ENCODE measurements at regions of chr5 and their contacts with region 1.

Region 1: GRCh38 chr5:110757118-110757729 is 18.4 kb downstream of the SLC25A46 start:
- DNase-seq: no peak
- H3K4me3 ChIP-seq: no peak overlapping the region
- CTCF ChIP-seq: peak; percentile 53

Region 2: DNA sequence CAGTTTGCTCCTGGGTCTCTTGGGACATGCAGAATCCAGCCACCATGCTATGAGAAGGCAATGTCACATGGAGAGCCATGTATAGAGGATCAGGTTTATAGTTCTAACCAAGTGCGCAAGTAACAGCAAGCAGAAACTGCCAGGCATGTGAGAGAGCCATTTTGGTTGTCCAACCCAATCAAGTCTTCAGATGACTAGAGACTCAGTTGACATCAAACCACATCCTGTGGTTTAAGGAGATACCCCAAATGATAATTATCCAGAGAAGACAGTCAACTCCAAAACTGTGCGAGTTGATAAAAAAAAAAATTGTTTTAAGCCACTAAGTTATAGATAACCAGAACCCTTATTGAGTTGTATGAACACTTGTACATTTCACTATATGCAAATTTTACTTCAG is 71.0 kb before region 1 on chr5:
- CTCF ChIA-PET with region 1: no interaction called
- POLR2A ChIA-PET with region 1: no interaction called
- DNase-seq: no peak
- H3K4me3 ChIP-seq: no peak overlapping the region
- CTCF ChIP-seq: no peak

Region 3: DNA sequence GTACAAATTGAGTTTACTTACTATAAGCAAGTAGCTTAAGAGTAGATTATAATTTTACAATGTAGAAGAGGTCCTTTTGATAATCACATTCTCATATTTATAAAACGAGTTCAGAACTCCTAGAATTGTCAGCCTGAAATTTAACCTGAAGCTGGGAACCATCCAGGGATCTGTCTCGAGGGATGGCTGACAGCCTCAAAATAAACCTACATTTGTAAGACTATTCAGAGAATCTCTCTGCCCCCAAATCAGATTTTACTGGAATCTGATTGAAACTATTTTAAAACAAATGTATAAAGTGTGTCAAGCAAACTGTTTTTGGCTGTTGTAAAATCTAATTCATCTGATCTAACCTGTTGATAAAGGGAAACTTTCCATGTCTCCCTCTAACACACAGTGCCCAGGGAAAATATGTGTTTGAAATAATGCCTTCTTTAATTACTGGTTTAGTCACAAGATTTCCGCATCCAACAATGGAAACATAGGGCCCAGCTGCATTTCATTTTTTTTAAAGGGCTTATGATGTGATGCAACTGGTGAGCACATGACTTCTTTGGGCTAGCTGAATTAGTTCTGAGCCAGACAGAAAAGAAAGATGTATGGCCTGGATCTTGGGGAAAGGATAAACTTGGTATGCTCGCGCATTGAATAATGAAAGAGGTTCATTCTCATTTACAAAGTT is 11.9 kb after region 1 on chr5:
- CTCF ChIA-PET with region 1: interaction called, 25 read pairs
- POLR2A ChIA-PET with region 1: no interaction called
- DNase-seq: peak; percentile 57
- H3K4me3 ChIP-seq: no peak overlapping the region
- CTCF ChIP-seq: no peak

Region 4: GRCh38 chr5:110817437-110817836 is 60.2 kb after region 1 on chr5:
- CTCF ChIA-PET with region 1: no interaction called
- POLR2A ChIA-PET with region 1: no interaction called
- DNase-seq: no peak
- H3K4me3 ChIP-seq: no peak overlapping the region
- CTCF ChIP-seq: no peak

Region 5: GRCh38 chr5:110916381-110917049 is 159.3 kb after region 1 on chr5:
- CTCF ChIA-PET with region 1: no interaction called
- POLR2A ChIA-PET with region 1: no interaction called
- DNase-seq: no peak
- H3K4me3 ChIP-seq: no peak overlapping the region
- CTCF ChIP-seq: no peak

Region 6: DNA sequence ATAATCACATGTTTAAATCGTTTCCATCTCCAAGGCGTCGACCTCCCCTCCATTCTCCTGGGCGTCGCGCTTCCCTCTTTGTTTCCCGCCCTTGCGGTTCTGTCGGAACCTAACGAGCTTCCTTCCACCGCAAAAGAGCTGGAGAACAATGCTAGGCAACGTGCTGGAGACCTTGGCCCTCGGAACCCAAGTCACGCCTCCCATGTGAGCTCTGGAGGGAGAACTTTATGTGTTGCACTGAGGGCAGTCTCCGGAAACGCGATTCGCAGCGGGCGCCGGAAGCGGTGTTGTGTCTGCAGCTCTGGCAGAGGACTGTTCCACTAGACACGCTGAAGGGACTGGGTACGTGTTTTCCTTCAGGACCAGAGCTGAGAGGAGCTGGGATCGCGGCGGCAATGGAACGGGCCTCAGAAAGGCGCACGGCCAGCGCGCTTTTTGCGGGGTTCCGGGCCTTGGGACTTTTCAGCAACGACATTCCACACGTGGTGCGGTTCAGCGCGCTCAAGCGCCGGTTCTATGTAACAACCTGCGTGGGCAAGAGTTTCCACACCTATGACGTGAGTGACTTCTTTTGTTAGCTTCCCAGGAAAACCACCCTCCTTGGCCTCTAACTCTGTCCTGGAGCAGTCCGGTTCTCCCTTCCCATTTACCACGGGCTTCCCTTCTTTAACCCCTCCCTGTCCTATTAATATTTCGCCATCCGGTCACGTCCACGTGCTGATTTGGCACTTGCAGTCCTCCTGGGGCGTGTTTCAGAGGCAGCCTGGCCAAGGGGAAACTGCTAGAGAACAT is 335.0 kb after region 1 on chr5 and contains the start of gene WDR36:
- CTCF ChIA-PET with region 1: interaction called, 19 read pairs
- POLR2A ChIA-PET with region 1: no interaction called
- DNase-seq: peak; percentile 44
- H3K4me3 ChIP-seq: peak within 1 kb of the TSS; percentile 83
- CTCF ChIP-seq: no peak